CD8-positive, alpha-beta memory T cell (primary cell): ENCODE measurements at regions of chr5 and their contacts with region 1.

Region 1: DNA sequence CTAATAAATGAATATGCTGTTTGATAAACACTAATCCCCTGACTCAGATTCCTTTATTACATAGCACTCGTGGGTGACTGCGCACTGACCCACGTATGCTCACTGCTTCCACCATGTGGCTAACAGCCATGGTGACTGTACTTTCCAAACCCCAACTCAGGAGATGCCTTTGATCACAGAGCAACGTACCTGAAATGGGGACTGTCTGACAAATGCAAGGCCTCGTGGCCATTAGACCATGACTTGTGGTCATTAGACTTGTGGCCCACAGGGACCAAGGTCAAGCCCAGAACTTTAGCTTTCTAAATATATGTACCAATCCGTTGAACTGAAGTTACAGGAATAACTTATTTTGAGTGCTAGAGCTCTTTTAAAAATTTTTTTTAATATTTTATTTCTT is 46.6 kb downstream of the CYFIP2 start:
- DNase-seq: peak; percentile 24 to 73 (median 50)
- H3K4me3 ChIP-seq: no peak overlapping the region
- H3K4me3 Mint-ChIP-seq: no peak overlapping the region
- H3K27ac ChIP-seq: no peak overlapping the region
- H3K27ac Mint-ChIP-seq: peak overlapping the region; percentile 17 to 87 (median 82)
- H3K4me1 ChIP-seq: peaks cover 40% of the 10 kb centered on the region
- H3K4me1 Mint-ChIP-seq: peaks cover 29 to 46% (median 41%) of the 10 kb centered on the region in 3 donors
- H3K27me3 ChIP-seq: no peaks in the 10 kb centered on the region
- H3K27me3 Mint-ChIP-seq: no peaks in the 10 kb centered on the region

Region 2: GRCh38 chr5:157265714-157266285 is 46.7 kb before region 1 on chr5 and contains the start of gene CYFIP2:
- CTCF ChIA-PET with region 1: interaction called, 10 read pairs
- POLR2A ChIA-PET with region 1: interaction called, 3 read pairs
- DNase-seq: peak; percentile 82 to 92 (median 86)
- H3K4me3 ChIP-seq: peak within 1 kb of the TSS; percentile 75
- H3K4me3 Mint-ChIP-seq: peak within 1 kb of the TSS; percentile 97 to 99 (median 97)
- H3K27ac ChIP-seq: peak within 1 kb of the TSS; percentile 68
- H3K27ac Mint-ChIP-seq: peak within 1 kb of the TSS; percentile 92 to 99 (median 98)
- H3K4me1 ChIP-seq: peaks cover 66% of the 10 kb centered on the region
- H3K4me1 Mint-ChIP-seq: peaks cover 67 to 80% (median 79%) of the 10 kb centered on the region in 3 donors
- H3K27me3 ChIP-seq: no peaks in the 10 kb centered on the region
- H3K27me3 Mint-ChIP-seq: peaks cover 0 to 2% of the 10 kb centered on the region in 2 donors
- total RNA-seq, gene CYFIP2: 239 to 259 TPM

Region 3: DNA sequence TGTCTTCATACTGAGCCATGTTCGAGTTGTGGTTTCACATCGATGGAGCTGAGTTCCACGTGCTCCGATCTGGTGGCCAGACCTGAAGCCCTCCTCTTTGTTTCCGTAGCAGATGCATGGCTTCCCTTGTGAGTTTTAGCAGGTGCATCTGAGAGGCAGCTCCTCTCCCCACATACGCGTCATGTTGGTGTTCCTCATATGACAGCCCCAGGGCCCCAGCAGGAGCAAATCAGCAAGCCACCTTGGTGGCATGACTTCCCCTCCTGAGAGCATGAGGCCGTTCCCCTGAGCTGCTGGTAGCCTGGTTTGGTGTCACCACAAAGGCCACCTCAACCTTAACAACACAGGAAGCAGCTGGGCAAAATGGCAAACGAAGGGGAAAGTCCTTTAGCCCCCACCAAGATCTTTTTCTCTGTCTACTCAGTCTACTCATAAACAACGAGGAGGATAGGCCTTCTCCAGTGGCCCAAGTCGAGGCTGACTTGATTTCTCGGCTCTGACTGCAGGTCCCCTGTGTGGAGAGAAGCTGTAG is 40.7 kb before region 1 on chr5:
- CTCF ChIA-PET with region 1: interaction called, 13 read pairs
- POLR2A ChIA-PET with region 1: no interaction called
- DNase-seq: peak; percentile 71 to 95 (median 94)
- H3K4me3 ChIP-seq: peak overlapping the region; percentile 33
- H3K4me3 Mint-ChIP-seq: peak overlapping the region; percentile 74 to 89 (median 79)
- H3K27ac ChIP-seq: peak overlapping the region; percentile 57
- H3K27ac Mint-ChIP-seq: peak overlapping the region; percentile 96 to 99 (median 98)
- H3K4me1 ChIP-seq: peaks cover 94% of the 10 kb centered on the region
- H3K4me1 Mint-ChIP-seq: peaks cover 92 to 98% (median 95%) of the 10 kb centered on the region in 3 donors
- H3K27me3 ChIP-seq: no peaks in the 10 kb centered on the region
- H3K27me3 Mint-ChIP-seq: no peaks in the 10 kb centered on the region

Region 4: GRCh38 chr5:157328277-157328912 is 15.9 kb after region 1 on chr5:
- CTCF ChIA-PET with region 1: interaction called, 17 read pairs
- POLR2A ChIA-PET with region 1: no interaction called
- DNase-seq: peak; percentile 31 to 68 (median 59)
- H3K4me3 ChIP-seq: peak overlapping the region; percentile 7
- H3K4me3 Mint-ChIP-seq: peak overlapping the region in 2 of 7 donors; percentile 11 to 35
- H3K27ac ChIP-seq: no peak overlapping the region
- H3K27ac Mint-ChIP-seq: peak overlapping the region; percentile 2 to 91 (median 79)
- H3K4me1 ChIP-seq: peaks cover 30% of the 10 kb centered on the region
- H3K4me1 Mint-ChIP-seq: peaks cover 12 to 31% (median 27%) of the 10 kb centered on the region in 3 donors
- H3K27me3 ChIP-seq: no peaks in the 10 kb centered on the region
- H3K27me3 Mint-ChIP-seq: no peaks in the 10 kb centered on the region

Region 5: GRCh38 chr5:157354800-157355199 is 42.3 kb after region 1 on chr5:
- CTCF ChIA-PET with region 1: no interaction called
- POLR2A ChIA-PET with region 1: no interaction called
- DNase-seq: no peak
- H3K4me3 ChIP-seq: no peak overlapping the region
- H3K4me3 Mint-ChIP-seq: no peak overlapping the region
- H3K27ac ChIP-seq: no peak overlapping the region
- H3K27ac Mint-ChIP-seq: peak overlapping the region in 2 of 8 donors; percentile 8 to 33
- H3K4me1 ChIP-seq: no peaks in the 10 kb centered on the region
- H3K4me1 Mint-ChIP-seq: peaks cover 30 to 42% (median 37%) of the 10 kb centered on the region in 3 donors
- H3K27me3 ChIP-seq: no peaks in the 10 kb centered on the region
- H3K27me3 Mint-ChIP-seq: no peaks in the 10 kb centered on the region